ENCODE measurements at regions of chr17 and their contacts with region 1.

Region 1: DNA sequence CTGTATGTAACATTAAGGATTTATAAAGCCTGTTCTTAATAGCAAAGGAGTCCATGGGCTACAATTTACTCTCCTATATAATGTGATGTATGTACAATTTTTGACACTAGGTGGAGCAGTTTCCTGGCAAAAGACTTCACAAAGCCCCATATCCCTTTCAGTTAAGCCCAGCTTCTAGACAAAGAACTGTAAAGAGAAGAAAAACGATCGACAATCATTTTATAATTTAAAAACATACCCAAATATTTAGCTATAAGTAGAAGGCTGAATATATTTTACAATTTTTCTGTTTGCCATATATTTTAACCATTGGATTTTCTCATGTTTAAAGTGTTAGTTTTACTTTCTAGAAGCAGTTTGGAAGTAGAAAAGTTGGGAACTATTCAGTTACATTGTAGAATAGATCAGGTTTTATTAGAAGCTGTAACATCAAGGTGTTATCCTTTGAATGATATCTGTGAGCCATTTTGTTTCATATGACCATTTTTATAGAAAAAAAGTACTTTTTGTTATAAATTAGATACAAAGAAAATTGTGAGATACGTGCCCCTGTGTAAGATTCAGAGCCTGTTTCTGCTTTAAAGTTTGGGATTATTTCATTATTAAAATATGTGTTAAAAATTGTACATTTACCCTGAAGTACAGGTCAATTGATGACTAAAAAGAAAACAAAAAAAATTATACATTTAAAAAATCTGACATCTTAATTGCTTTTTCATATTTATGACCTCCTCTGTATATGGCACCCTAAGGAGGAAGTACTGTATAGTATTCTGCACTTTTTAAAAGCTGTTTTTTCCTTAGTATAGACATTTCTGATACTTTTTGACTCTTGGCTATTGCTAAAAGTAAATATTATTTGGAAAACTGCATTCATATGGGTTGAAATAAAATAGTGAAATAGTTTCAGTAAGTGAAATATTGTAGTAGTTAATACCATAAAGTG is 46.3 kb downstream of the VMP1 start:
- DNase-seq: peak; percentile 97
- ATAC-seq: peak; percentile 65
- H3K4me3 ChIP-seq: peak overlapping the region; percentile 48
- H3K27ac ChIP-seq: peak overlapping the region; percentile 95
- H3K4me1 ChIP-seq: peaks cover 43% of the 10 kb centered on the region
- H3K27me3 ChIP-seq: no peaks in the 10 kb centered on the region
- CTCF ChIP-seq: peak; percentile 94

Region 2: DNA sequence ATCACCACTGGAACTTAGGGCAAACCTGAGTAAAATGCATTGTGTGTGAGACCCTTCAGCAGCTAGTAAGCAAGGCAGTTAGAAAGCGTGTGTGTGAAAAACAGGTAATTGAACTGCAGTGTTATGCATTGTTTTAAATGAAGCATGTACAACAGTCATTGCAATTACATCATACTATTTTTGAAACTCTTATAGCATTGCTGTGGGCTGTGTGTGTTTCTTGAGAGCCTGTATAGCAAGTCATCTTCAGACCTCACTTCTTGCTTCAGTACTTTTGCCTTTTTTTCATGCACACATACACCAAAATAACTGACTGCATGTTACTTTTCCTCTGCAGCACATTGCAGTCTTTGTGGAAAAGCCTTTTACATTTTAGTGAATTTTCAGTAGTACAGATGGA is 65.8 kb before region 1 on chr17:
- CTCF ChIA-PET with region 1: no interaction called
- POLR2A ChIA-PET with region 1: no interaction called
- intact Hi-C with region 1: no loop called
- DNase-seq: no peak
- ATAC-seq: no peak
- H3K4me3 ChIP-seq: no peak overlapping the region
- H3K27ac ChIP-seq: no peak overlapping the region
- H3K4me1 ChIP-seq: no peaks in the 10 kb centered on the region
- H3K27me3 ChIP-seq: no peaks in the 10 kb centered on the region
- CTCF ChIP-seq: no peak

Region 3: GRCh38 chr17:59779521-59779920 is 25.7 kb after region 1 on chr17:
- CTCF ChIA-PET with region 1: interaction called, 4 read pairs
- POLR2A ChIA-PET with region 1: interaction called, 16 read pairs
- intact Hi-C with region 1: no loop called
- DNase-seq: no peak
- ATAC-seq: no peak
- H3K4me3 ChIP-seq: no peak overlapping the region
- H3K27ac ChIP-seq: no peak overlapping the region
- H3K4me1 ChIP-seq: peaks cover 33% of the 10 kb centered on the region
- H3K27me3 ChIP-seq: no peaks in the 10 kb centered on the region
- CTCF ChIP-seq: no peak

Region 4: DNA sequence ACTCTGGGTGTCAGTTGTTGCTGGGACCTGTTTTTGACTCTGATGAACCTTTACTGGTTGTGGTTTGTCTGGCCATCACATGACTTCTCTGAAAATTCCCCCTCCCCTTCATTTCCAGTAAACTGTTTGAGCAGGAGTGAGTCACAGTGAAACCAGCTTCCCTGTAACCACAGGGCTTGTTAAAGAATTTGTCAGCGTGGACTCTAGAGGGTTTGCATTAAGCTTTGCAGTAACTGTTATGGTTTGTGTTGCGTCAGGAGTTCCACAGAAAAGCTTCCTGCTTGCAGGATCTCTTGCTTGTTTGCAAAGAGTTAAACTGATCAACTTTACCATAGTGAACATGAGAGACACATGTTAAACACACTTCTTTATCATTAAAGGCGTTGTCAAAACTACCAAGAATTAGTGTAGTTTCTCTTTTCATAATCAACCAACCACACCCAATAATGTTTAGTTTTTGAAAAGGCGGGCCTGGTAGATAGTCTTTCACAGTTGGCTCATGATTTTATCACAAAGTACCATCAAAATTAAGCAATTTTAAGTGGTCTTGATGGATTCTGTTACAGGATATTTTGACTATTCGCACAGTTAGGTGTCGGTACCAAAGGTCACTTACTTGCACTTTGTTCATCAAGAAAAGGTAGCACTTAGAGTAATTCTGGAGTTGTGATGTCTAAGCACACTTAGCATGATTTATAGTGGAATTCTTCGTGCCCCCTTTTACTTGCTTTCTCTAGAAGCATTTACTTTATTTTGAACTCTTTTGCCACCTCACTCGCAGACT is 32.9 kb after region 1 on chr17:
- CTCF ChIA-PET with region 1: interaction called, 5 read pairs
- POLR2A ChIA-PET with region 1: interaction called, 13 read pairs
- intact Hi-C with region 1: loop called (anchors 1 kb)
- DNase-seq: peak; percentile 100
- ATAC-seq: peak; percentile 83
- H3K4me3 ChIP-seq: peak overlapping the region; percentile 42
- H3K27ac ChIP-seq: peak overlapping the region; percentile 88
- H3K4me1 ChIP-seq: peaks cover 62% of the 10 kb centered on the region
- H3K27me3 ChIP-seq: no peaks in the 10 kb centered on the region
- CTCF ChIP-seq: no peak

Region 5: GRCh38 chr17:59796785-59797205 is 43.0 kb after region 1 on chr17:
- CTCF ChIA-PET with region 1: no interaction called
- POLR2A ChIA-PET with region 1: no interaction called
- intact Hi-C with region 1: no loop called
- DNase-seq: no peak
- ATAC-seq: no peak
- H3K4me3 ChIP-seq: no peak overlapping the region
- H3K27ac ChIP-seq: no peak overlapping the region
- H3K4me1 ChIP-seq: no peaks in the 10 kb centered on the region
- H3K27me3 ChIP-seq: no peaks in the 10 kb centered on the region
- CTCF ChIP-seq: no peak

Region 6: GRCh38 chr17:59829217-59830006 is 75.6 kb after region 1 on chr17:
- CTCF ChIA-PET with region 1: interaction called, 3 read pairs
- POLR2A ChIA-PET with region 1: interaction called, 8 read pairs
- intact Hi-C with region 1: loop called (anchors 1 kb)
- DNase-seq: peak; percentile 100
- ATAC-seq: peak; percentile 88
- H3K4me3 ChIP-seq: peak overlapping the region; percentile 51
- H3K27ac ChIP-seq: peak overlapping the region; percentile 96
- H3K4me1 ChIP-seq: peaks cover 66% of the 10 kb centered on the region
- H3K27me3 ChIP-seq: no peaks in the 10 kb centered on the region
- CTCF ChIP-seq: no peak

Region 7: GRCh38 chr17:59846394-59847165 is 92.8 kb after region 1 on chr17:
- CTCF ChIA-PET with region 1: interaction called, 8 read pairs
- POLR2A ChIA-PET with region 1: interaction called, 40 read pairs
- intact Hi-C with region 1: loop called (anchors 1 kb)
- DNase-seq: peak; percentile 99
- ATAC-seq: peak; percentile 32
- H3K4me3 ChIP-seq: peak overlapping the region; percentile 54; the same call in 1 of the 2 replicates
- H3K27ac ChIP-seq: peak overlapping the region; percentile 95
- H3K4me1 ChIP-seq: peaks cover 50% of the 10 kb centered on the region
- H3K27me3 ChIP-seq: no peaks in the 10 kb centered on the region
- CTCF ChIP-seq: no peak

Region 8: GRCh38 chr17:59853168-59853918 is 99.5 kb after region 1 on chr17:
- CTCF ChIA-PET with region 1: interaction called, 61 read pairs
- POLR2A ChIA-PET with region 1: interaction called, 22 read pairs
- intact Hi-C with region 1: no loop called
- DNase-seq: peak; percentile 100
- ATAC-seq: peak; percentile 90
- H3K4me3 ChIP-seq: no peak overlapping the region
- H3K27ac ChIP-seq: peak overlapping the region; percentile 92
- H3K4me1 ChIP-seq: peaks cover 62% of the 10 kb centered on the region
- H3K27me3 ChIP-seq: no peaks in the 10 kb centered on the region
- CTCF ChIP-seq: peak; percentile 90

Region 9: DNA sequence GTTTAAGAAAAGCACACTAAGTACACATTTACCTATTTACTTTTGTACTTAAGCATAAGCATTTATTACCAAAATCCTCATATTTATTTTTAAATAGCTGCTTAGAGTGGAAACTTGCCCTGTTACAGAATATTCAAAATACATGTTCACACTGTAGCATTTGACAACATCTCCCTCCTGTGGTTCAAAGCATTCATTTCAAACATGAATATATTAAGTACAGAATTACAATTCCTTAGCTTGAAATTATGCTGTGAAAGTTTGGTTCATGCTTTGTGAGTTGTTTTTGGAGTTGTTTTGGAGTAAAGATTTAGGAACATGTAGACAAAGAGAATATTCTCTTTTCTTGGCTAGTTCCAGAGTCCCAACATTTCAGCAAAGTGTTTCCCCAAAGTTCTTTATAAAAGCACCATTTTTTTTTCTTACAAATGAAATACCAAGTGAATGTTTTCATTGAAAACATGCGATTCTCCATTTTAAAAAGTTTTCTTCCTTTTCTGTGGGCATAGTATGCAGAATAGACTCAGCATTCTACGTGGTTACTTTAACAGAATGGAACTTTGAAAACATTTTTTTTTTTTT is 105.7 kb after region 1 on chr17:
- CTCF ChIA-PET with region 1: interaction called, 61 read pairs
- POLR2A ChIA-PET with region 1: interaction called, 4 read pairs
- intact Hi-C with region 1: loop called (anchors 1 kb)
- DNase-seq: peak; percentile 85
- ATAC-seq: peak; percentile 47
- H3K4me3 ChIP-seq: no peak overlapping the region
- H3K27ac ChIP-seq: peak overlapping the region; percentile 92
- H3K4me1 ChIP-seq: peaks cover 43% of the 10 kb centered on the region
- H3K27me3 ChIP-seq: no peaks in the 10 kb centered on the region
- CTCF ChIP-seq: peak; percentile 94